ENCODE measurements at regions of chr1 and their contacts with region 1.

Region 1: DNA sequence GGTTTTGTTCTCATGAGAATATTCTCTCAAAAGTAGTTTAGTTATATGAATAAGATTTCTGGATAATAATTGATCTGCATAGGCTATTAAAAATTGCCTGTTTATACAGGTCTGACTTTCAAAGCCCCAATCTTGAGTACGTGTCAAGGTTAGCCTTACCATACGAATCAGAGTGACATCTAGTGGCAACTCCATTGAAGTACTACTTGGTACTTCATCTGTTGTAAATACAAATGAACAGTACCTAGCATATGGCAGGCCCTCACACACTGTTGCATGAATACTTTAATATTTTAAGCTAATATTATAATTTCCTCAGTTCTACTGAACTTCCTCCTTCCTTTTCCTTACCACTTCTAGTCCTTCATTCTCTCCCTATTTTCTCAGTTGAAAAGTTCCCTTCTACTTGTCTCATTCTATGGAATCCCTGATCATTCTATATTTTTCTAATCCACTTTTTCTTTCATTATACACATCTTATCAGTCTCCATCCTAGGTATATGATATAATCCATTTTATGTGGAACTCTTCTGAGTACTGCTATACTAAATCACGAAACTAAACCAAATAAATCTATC is 101.2 kb downstream of the AKT3 start:
- DNase-seq: peak; percentile 65
- H3K4me3 ChIP-seq: no peak overlapping the region
- H3K27ac ChIP-seq: no peak overlapping the region
- H3K27me3 ChIP-seq: no peaks in the 10 kb centered on the region
- CTCF ChIP-seq: peak; percentile 85

Region 2: DNA sequence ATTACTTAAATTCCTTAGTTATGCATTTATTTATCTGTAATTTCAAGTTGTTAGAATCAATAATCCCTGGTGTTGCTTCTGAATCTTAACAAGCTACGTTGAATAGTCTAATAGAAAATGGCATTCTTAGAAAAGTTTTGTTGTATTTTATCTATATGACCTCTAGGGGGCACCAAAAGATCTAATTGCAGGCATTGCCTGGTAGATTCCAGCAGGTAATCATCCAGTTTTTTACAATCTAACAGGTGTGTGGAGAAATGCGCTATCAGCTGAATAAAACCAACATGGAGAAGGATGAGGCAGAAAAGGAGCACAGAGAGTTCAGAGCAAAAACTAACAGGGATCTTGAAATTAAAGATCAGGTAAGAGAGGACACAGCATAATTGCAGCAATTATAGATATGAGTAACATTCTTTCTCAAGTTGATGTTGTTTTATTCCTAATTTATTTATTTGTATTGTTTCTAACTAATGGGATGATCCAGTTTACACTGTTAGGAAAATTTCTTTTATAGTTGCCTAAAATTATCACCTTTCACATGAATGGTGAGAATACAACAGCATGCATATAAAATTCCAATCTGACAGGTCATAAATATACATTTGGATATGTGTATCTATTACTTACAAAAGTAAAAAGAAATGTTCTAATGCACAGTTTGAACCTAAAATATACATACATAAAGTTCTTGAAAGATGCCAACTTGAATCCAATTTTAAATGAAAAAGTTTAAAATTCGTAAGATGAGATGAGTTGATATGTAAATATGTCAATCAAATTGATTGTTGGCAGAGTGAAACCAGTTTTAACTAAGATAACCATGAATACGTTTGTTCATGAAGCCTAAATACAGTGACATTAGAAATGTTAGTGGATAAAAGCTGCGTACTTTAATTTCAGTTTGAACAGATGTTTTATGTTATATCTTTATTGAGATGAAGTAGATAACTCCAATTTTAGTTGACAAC is 404.5 kb before region 1 on chr1:
- CTCF ChIA-PET with region 1: interaction called, 32 read pairs
- POLR2A ChIA-PET with region 1: no interaction called
- DNase-seq: no peak
- H3K4me3 ChIP-seq: no peak overlapping the region
- H3K27ac ChIP-seq: no peak overlapping the region
- H3K27me3 ChIP-seq: no peaks in the 10 kb centered on the region
- CTCF ChIP-seq: peak; percentile 73

Region 3: DNA sequence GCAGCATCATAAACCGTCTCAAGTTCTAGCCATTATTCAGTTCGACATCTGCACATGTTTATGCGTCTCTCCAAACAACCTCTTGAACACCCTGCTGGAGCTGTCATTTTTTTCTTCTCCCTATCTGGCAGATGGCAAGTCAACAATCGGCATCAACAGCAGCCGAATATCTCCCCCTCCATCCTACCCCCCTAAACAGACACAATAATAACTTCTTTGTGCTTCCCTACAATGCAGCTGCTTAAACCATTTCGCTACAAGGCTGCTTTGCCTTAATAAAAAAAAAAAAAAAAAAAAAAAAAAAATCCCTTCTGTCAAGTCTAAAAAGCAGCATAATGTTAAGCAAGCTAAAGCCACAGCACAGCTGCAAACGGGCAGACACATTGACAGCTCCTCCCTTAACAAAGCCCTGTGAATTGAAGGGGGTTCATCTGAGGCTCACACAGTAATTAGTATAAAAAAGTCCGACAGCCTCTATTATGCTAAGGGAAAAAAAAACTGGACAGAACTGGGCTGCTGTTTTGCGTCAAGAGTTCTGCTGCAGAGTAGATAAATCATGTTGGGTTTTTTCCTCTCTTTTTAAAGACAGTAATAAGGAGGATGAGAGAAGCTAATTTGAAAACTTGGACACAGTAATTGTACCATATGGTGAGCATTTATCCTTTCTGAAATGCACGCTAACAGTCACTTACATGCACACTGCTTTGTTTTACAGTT is 35.2 kb before region 1 on chr1:
- CTCF ChIA-PET with region 1: interaction called, 18 read pairs
- POLR2A ChIA-PET with region 1: no interaction called
- DNase-seq: no peak
- H3K4me3 ChIP-seq: peak overlapping the region; percentile 11; the same call in 1 of the 2 replicates
- H3K27ac ChIP-seq: no peak overlapping the region
- H3K27me3 ChIP-seq: no peaks in the 10 kb centered on the region
- CTCF ChIP-seq: no peak

Region 4: DNA sequence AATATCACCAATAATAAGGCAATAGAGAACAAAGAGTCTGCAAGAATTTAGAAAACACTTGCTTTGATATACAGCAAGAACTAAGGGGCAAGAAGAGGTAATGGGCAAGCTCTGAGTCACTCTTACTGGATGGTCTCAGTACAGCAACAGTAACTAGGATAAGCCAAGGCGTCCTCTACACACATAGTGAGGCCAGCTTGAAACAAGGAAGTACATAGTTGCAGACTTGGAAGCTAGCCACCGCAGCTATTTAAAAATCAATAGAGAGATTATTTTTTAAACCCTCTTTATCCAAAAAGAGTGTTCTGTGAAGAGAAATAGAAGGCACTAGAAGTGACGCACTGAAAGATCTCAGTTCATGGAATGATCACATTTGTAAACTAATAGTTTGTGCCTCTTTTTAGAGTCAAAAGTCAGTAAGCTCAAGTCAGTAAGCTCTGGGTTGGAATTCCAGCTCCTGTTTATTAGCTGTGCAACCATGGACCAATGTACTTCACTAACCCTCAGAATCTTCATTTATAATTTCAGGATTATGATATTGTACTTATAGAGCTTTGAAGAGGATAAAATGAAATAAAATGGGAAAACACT is 17.4 kb before region 1 on chr1:
- CTCF ChIA-PET with region 1: interaction called, 16 read pairs
- POLR2A ChIA-PET with region 1: no interaction called
- DNase-seq: no peak
- H3K4me3 ChIP-seq: no peak overlapping the region
- H3K27ac ChIP-seq: no peak overlapping the region
- H3K27me3 ChIP-seq: no peaks in the 10 kb centered on the region
- CTCF ChIP-seq: no peak

Region 5: DNA sequence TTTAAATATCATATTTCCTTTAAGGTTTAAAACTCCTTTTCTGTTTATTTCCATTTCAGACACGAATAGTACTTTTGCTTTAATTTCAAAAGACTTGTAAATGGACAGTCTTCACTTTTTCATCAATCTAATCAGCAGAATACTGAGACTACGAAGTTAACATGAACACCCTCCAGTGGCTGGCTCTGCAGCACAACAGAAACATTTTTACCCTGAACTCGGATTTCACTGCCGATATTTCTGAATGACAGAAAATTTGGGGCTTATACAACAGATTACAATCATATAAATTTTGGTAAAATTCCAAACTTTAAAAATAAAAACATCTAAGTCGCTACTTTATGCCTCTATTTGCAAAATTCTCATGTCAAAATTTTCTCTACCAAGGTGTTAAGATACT is 15.0 kb after region 1 on chr1:
- CTCF ChIA-PET with region 1: interaction called, 21 read pairs
- POLR2A ChIA-PET with region 1: no interaction called
- DNase-seq: no peak
- H3K4me3 ChIP-seq: no peak overlapping the region
- H3K27ac ChIP-seq: no peak overlapping the region
- H3K27me3 ChIP-seq: no peaks in the 10 kb centered on the region
- CTCF ChIP-seq: no peak

Measured in AG04450 (cell line).